Caco-2 (cell line): ENCODE measurements at regions of chr21 and their contacts with region 1.

Region 1: DNA sequence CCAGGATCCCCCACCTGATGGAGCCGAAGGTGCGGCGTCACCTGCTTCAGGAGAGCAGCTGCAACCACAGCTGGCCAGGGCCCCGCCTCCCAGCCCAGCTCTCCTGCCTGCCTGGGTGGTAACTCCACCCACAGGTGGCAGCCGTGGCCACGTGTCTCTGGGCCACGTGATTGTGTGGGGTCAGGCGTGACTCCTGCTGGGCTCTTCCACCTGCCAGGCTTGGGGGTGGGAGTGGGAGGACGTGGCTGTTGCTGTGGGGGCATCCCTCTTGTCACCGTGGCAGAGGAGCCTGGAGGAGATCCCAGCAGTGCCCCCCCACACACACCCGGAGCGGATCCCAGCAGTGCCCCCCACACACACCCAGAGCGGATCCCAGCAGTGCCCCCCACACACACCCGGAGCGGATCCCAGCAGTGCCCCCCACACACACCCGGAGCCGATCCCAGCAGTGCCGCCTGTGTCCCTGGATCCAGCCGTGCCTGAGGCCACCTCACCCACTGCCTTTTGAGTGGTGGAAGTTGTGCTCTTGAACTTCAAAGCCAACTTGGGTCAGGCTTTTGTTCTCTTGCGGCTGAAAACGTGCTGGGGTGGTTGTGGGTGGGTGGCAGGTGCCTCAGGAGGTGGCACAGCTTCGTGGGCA is 32.2 kb downstream of the POFUT2 start:
- DNase-seq: peak in 1 of 2 experiments; percentile 19
- H3K4me3 ChIP-seq: no peak overlapping the region
- H3K4me3 Mint-ChIP-seq: no peak overlapping the region
- H3K27ac Mint-ChIP-seq: no peak overlapping the region
- H3K4me1 ChIP-seq: peaks cover 29% of the 10 kb centered on the region
- H3K4me1 Mint-ChIP-seq: no peaks in the 10 kb centered on the region
- H3K27me3 ChIP-seq: no peaks in the 10 kb centered on the region
- H3K27me3 Mint-ChIP-seq: no peaks in the 10 kb centered on the region
- CTCF ChIP-seq: no peak

Region 2: GRCh38 chr21:45287438-45288391 is 32.2 kb after region 1 on chr21 and contains the start of gene POFUT2:
- CTCF ChIA-PET with region 1: interaction called, 11 read pairs
- POLR2A ChIA-PET with region 1: interaction called, 6 read pairs
- intact Hi-C with region 1: no loop called
- DNase-seq: peak; percentile 96 to 98
- H3K4me3 ChIP-seq: peak within 1 kb of the TSS; percentile 91
- H3K4me3 Mint-ChIP-seq: peak within 1 kb of the TSS; percentile 72
- H3K27ac Mint-ChIP-seq: peak within 1 kb of the TSS; percentile 66
- H3K4me1 ChIP-seq: peaks cover 9% of the 10 kb centered on the region
- H3K4me1 Mint-ChIP-seq: peaks cover 6% of the 10 kb centered on the region
- H3K27me3 ChIP-seq: no peaks in the 10 kb centered on the region
- H3K27me3 Mint-ChIP-seq: no peaks in the 10 kb centered on the region
- CTCF ChIP-seq: no peak
- total RNA-seq, gene POFUT2: 32.0 and 36.5 TPM in 2 replicates

Region 3: GRCh38 chr21:45309069-45309986 is 53.8 kb after region 1 on chr21:
- CTCF ChIA-PET with region 1: no interaction called
- POLR2A ChIA-PET with region 1: no interaction called
- intact Hi-C with region 1: no loop called
- DNase-seq: peak; percentile 56 to 71
- H3K4me3 ChIP-seq: no peak overlapping the region
- H3K4me3 Mint-ChIP-seq: no peak overlapping the region
- H3K27ac Mint-ChIP-seq: peak overlapping the region; percentile 48
- H3K4me1 ChIP-seq: peaks cover 13% of the 10 kb centered on the region
- H3K4me1 Mint-ChIP-seq: peaks cover 10% of the 10 kb centered on the region
- H3K27me3 ChIP-seq: no peaks in the 10 kb centered on the region
- H3K27me3 Mint-ChIP-seq: no peaks in the 10 kb centered on the region
- CTCF ChIP-seq: peak; percentile 54 to 63

Region 4: GRCh38 chr21:45894443-45894810 is 638.9 kb after region 1 on chr21:
- CTCF ChIA-PET with region 1: no interaction called
- POLR2A ChIA-PET with region 1: no interaction called
- intact Hi-C with region 1: loop called (anchors 5 kb)
- DNase-seq: peak in 1 of 2 experiments; percentile 15
- H3K4me3 ChIP-seq: no peak overlapping the region
- H3K4me3 Mint-ChIP-seq: no peak overlapping the region
- H3K27ac Mint-ChIP-seq: no peak overlapping the region
- H3K4me1 ChIP-seq: no peaks in the 10 kb centered on the region
- H3K4me1 Mint-ChIP-seq: no peaks in the 10 kb centered on the region
- H3K27me3 ChIP-seq: no peaks in the 10 kb centered on the region
- H3K27me3 Mint-ChIP-seq: peaks cover 9% of the 10 kb centered on the region
- CTCF ChIP-seq: no peak